Activated CD8-positive, alpha-beta T cell treated with anti-CD3 and anti-CD28 coated beads, Interleukin-2, amount 10 ng/mL, durations not matched to agents 7 days and 5 days (primary cell): ENCODE measurements at regions of chr17 and their contacts with region 1.

Region 1: DNA sequence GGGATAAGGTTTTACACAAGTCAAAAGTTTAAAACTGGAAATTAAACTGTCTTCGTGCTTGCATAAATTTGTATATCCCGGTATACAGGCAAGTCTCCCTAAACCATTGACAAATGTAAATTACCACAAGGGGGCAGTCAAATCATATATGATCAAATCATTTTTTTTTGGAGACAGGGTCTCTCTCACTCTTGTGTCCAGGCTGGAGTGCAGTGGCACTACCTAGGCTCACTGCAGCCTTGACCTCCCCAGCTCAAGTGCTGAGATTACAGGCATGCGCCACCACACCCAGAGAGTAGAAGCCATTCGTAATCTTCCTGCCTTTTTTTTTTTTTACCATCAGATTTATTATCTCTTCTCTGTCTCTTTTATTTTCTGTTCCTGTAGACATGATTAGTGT is 18.5 kb downstream of the TOP2A start:
- DNase-seq: no peak
- ATAC-seq: peak; percentile 67
- H3K4me3 Mint-ChIP-seq: no peak overlapping the region
- H3K27ac Mint-ChIP-seq: no peak overlapping the region
- H3K4me1 Mint-ChIP-seq: peaks cover 24% of the 10 kb centered on the region
- H3K27me3 Mint-ChIP-seq: no peaks in the 10 kb centered on the region

Region 2: GRCh38 chr17:40287494-40288369 is 111.5 kb before region 1 on chr17 and contains the start of gene CDC6:
- CTCF ChIA-PET with region 1: no interaction called
- POLR2A ChIA-PET with region 1: no interaction called
- DNase-seq: peak; percentile 100
- ATAC-seq: peak; percentile 96
- H3K4me3 Mint-ChIP-seq: peak within 1 kb of the TSS; percentile 98
- H3K27ac Mint-ChIP-seq: peak within 1 kb of the TSS; percentile 97
- H3K4me1 Mint-ChIP-seq: peaks cover 45% of the 10 kb centered on the region
- H3K27me3 Mint-ChIP-seq: no peaks in the 10 kb centered on the region
- total RNA-seq, gene CDC6: 103 to 110 TPM

Region 3: GRCh38 chr17:40387680-40388079 is 11.5 kb before region 1 on chr17:
- CTCF ChIA-PET with region 1: interaction called, 17 read pairs
- POLR2A ChIA-PET with region 1: no interaction called
- DNase-seq: no peak
- ATAC-seq: no peak
- H3K4me3 Mint-ChIP-seq: no peak overlapping the region
- H3K27ac Mint-ChIP-seq: no peak overlapping the region
- H3K4me1 Mint-ChIP-seq: no peaks in the 10 kb centered on the region
- H3K27me3 Mint-ChIP-seq: no peaks in the 10 kb centered on the region

Region 4: DNA sequence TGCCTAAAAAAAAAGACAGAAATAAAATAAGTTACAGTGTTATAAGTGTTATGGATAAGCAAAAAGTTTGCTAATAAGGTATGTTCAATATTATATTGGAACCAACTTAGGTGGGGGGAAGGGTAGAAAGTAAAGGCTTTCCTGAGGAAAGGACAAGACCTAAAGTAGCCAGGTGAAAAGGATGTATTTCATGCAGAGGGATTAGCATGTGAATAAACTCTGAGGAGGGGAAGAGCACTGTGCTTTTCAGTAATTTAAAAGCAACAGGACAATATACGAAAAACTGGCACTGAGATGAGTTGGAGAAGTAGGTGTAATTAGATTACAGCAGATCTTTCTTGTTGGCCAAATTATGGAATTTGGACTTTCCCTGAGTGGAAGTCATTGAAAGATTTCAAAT is 10.9 kb after region 1 on chr17:
- CTCF ChIA-PET with region 1: interaction called, 28 read pairs
- POLR2A ChIA-PET with region 1: interaction called, 4 read pairs
- DNase-seq: no peak
- ATAC-seq: no peak
- H3K4me3 Mint-ChIP-seq: no peak overlapping the region
- H3K27ac Mint-ChIP-seq: peak overlapping the region; percentile 27
- H3K4me1 Mint-ChIP-seq: peaks cover 41% of the 10 kb centered on the region
- H3K27me3 Mint-ChIP-seq: no peaks in the 10 kb centered on the region